ENCODE measurements at regions of chr14 and their contacts with region 1.

Region 1: DNA sequence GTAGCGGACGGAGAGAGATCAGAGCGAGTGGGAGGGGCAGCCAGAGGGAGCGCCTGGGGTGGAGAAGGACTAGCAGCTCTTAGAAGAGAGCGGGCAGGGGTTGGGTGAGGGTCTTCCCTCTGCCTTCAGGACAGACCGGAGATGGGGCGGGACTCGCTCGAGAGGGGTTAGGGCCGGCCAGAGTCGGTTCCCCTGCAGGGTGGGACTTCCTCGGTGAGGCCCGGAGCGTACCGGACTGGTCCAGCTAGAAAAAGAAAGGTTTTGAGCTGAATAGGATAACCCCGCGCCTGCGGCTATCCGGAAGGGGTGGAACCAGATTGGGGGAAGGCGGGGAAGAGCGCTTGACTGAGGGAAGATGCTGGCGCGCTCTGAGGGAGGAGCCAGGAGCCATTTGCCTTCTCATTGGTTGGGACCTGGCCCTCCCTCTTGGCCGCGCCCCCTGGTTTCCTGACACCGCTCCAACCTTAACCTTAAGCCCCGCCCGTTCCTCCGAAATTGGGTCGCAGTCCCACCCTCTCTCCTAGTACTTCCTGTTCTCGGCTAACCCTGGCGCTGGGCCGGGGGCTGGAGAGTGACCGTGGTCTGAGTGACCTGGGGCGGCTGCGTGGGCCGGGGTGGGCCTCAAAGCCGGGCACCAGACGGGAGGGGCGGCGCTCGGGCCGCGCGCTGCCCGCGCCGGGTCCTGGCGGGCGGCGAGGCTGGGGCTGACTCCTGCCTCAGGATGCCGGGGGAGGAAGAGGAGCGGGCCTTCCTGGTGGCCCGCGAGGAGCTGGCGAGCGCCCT is at the start of gene RNF31:
- DNase-seq: peak; percentile 99
- H3K4me3 Mint-ChIP-seq: peak within 1 kb of the TSS; percentile 96
- H3K27ac Mint-ChIP-seq: peak within 1 kb of the TSS; percentile 99
- H3K4me1 Mint-ChIP-seq: peaks cover 58% of the 10 kb centered on the region
- H3K27me3 Mint-ChIP-seq: no peaks in the 10 kb centered on the region
- total RNA-seq, gene RNF31: 122 to 129 TPM

Region 2: GRCh38 chr14:24080888-24081738 is 66.1 kb before region 1 on chr14:
- CTCF ChIA-PET with region 1: interaction called, 3 read pairs
- POLR2A ChIA-PET with region 1: interaction called, 15 read pairs
- DNase-seq: peak; percentile 83
- H3K4me3 Mint-ChIP-seq: peak overlapping the region; percentile 74
- H3K27ac Mint-ChIP-seq: peak overlapping the region; percentile 75
- H3K4me1 Mint-ChIP-seq: peaks cover 32% of the 10 kb centered on the region
- H3K27me3 Mint-ChIP-seq: peaks cover 11% of the 10 kb centered on the region

Region 3: DNA sequence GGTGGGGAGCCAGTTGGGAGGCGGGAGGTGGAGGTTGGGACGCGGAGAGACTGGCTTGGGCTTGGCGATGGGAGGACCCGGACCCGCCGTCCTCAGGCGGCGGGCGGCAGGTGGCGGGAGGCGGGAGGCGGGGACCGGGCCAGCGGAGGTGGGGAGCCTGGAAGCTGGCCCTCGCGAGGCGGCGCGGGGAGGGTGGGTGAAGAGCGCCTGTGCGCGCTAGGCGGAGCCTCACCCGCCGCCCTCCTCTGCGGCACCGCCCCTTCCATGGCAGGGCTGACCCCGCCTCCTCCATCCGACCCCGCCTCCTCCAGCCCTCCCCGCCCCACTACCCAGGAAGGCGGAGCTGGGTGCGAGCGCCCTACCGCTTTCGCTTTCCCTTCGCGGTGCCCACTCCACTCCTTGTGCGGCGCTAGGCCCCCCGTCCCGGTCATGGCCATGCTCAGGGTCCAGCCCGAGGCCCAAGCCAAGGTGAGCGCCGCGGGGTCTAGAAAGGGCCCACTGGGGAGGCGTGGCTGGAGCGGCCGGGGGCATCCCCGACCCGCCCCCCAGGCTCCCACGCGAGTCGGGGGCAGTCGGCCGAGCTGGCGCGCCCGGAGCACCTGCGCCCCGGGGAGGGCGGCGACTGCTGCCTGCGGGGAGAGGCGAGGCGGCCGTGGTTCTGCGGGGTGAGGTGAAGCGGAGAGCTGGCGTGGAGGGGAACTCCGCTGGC is 11.2 kb before region 1 on chr14 and contains the start of gene PSME1:
- CTCF ChIA-PET with region 1: interaction called, 20 read pairs
- POLR2A ChIA-PET with region 1: interaction called, 99 read pairs
- DNase-seq: peak; percentile 96
- H3K4me3 Mint-ChIP-seq: peak within 1 kb of the TSS; percentile 93
- H3K27ac Mint-ChIP-seq: peak within 1 kb of the TSS; percentile 89
- H3K4me1 Mint-ChIP-seq: peaks cover 53% of the 10 kb centered on the region
- H3K27me3 Mint-ChIP-seq: no peaks in the 10 kb centered on the region
- total RNA-seq, gene PSME1: 391 to 397 TPM

Region 4: GRCh38 chr14:24188251-24189058 is 41.3 kb after region 1 on chr14 and contains the start of gene IPO4:
- CTCF ChIA-PET with region 1: no interaction called
- POLR2A ChIA-PET with region 1: interaction called, 23 read pairs
- DNase-seq: peak; percentile 96
- H3K4me3 Mint-ChIP-seq: peak within 1 kb of the TSS; percentile 81
- H3K27ac Mint-ChIP-seq: peak within 1 kb of the TSS; percentile 79
- H3K4me1 Mint-ChIP-seq: peaks cover 59% of the 10 kb centered on the region
- H3K27me3 Mint-ChIP-seq: no peaks in the 10 kb centered on the region
- total RNA-seq, gene IPO4: 24.0 to 26.2 TPM

Measured in activated CD4-positive, alpha-beta memory T cell treated with anti-CD3 and anti-CD28 coated beads, Interleukin-2, amount 10 ng/mL, durations not matched to agents 7 days and 5 days (primary cell).